ENCODE measurements at regions of chr5 and their contacts with region 1.

Region 1: GRCh38 chr5:107985144-107985543 is 314.4 kb upstream of the EFNA5 start:
- DNase-seq: no peak
- H3K4me3 ChIP-seq: no peak overlapping the region
- H3K27ac ChIP-seq: no peak overlapping the region
- H3K4me1 ChIP-seq: no peaks in the 10 kb centered on the region
- H3K27me3 ChIP-seq: no peaks in the 10 kb centered on the region
- CTCF ChIP-seq: no peak
- POLR2A ChIP-seq: no peak

Region 2: GRCh38 chr5:108028412-108028811 is 43.3 kb after region 1 on chr5:
- intact Hi-C with region 1: loop called (anchors 2 kb)
- DNase-seq: no peak
- H3K4me3 ChIP-seq: no peak overlapping the region
- H3K27ac ChIP-seq: no peak overlapping the region
- H3K4me1 ChIP-seq: no peaks in the 10 kb centered on the region
- H3K27me3 ChIP-seq: no peaks in the 10 kb centered on the region
- CTCF ChIP-seq: no peak
- POLR2A ChIP-seq: no peak

Region 3: GRCh38 chr5:108061941-108062340 is 76.8 kb after region 1 on chr5:
- intact Hi-C with region 1: no loop called
- DNase-seq: no peak
- H3K4me3 ChIP-seq: no peak overlapping the region
- H3K27ac ChIP-seq: no peak overlapping the region
- H3K4me1 ChIP-seq: no peaks in the 10 kb centered on the region
- H3K27me3 ChIP-seq: no peaks in the 10 kb centered on the region
- CTCF ChIP-seq: no peak
- POLR2A ChIP-seq: no peak

Region 4: GRCh38 chr5:108111736-108112135 is 126.6 kb after region 1 on chr5:
- intact Hi-C with region 1: no loop called
- DNase-seq: no peak
- H3K4me3 ChIP-seq: no peak overlapping the region
- H3K27ac ChIP-seq: no peak overlapping the region
- H3K4me1 ChIP-seq: no peaks in the 10 kb centered on the region
- H3K27me3 ChIP-seq: no peaks in the 10 kb centered on the region
- CTCF ChIP-seq: no peak
- POLR2A ChIP-seq: no peak

Region 5: DNA sequence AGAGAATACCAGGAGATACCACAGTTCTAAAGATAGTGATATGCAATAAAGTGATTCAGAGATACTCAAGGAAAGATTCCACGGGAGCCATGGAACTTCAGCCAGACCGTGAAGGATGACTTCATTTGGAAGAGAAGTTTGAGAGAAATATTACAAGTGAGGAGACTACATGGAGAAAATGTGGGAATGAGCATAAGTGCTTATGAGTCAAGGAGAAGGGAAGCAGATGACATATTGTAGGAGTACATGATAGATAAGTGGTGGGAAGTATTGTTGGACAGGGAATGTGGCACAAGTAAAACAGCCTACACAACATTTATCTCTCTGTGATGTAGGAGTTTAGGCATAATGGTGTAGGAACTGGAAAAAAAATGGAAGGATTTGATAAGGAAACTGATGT is 518.8 kb after region 1 on chr5:
- intact Hi-C with region 1: no loop called
- DNase-seq: no peak
- H3K4me3 ChIP-seq: no peak overlapping the region
- H3K27ac ChIP-seq: no peak overlapping the region
- H3K4me1 ChIP-seq: no peaks in the 10 kb centered on the region
- H3K27me3 ChIP-seq: no peaks in the 10 kb centered on the region
- CTCF ChIP-seq: no peak
- POLR2A ChIP-seq: no peak